HEK293 (cell line): ENCODE measurements at regions of chr16 and their contacts with region 1.

Region 1: DNA sequence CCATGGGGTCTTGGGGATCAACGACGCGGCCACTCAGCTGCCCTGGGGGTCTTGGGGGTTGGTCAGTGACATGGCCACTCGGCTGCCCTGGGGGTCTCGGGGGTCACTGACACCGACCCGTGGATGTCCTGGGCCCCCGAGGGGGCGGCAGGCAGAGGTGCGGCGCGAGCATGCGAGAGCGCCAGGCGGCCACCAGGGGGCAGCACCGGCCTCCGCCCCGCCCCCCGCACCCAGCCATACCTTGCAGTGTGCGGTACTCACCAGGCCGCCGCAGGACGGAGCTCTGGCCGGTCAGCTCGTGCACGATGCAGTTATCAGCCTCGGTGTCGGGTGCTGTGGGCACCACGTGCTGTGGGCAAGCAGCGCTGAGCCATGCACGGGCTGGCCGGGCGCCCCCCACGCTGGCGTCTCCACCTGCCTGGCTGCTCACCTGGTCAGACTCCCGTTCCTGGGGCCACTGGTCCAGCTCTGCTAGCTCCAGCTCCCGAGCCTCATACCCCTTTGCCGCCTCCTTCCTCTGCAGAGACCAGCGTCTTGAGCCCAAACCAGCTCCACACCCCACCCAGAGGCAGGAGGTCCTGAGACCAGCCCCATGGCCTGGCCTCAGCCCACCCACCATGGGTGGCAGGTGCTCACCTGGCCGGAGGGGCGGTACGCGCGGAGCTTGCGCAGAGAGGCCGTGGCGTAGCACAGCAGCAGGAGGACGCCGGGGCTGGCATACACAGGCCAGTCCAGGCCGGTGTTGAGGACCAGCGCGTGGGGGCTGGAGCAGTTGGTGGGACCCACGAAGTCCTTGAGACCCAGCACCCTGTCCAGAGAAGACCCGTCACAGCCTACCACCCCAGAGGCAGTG is 31.2 kb downstream of the CTU2 start:
- H3K4me3 ChIP-seq: no peak overlapping the region
- H3K27ac ChIP-seq: no peak overlapping the region; the same call in 1 of the 2 replicates
- H3K4me1 ChIP-seq: no peaks in the 10 kb centered on the region; the same call in 1 of the 2 replicates
- CTCF ChIP-seq: peak; percentile 99

Region 2: DNA sequence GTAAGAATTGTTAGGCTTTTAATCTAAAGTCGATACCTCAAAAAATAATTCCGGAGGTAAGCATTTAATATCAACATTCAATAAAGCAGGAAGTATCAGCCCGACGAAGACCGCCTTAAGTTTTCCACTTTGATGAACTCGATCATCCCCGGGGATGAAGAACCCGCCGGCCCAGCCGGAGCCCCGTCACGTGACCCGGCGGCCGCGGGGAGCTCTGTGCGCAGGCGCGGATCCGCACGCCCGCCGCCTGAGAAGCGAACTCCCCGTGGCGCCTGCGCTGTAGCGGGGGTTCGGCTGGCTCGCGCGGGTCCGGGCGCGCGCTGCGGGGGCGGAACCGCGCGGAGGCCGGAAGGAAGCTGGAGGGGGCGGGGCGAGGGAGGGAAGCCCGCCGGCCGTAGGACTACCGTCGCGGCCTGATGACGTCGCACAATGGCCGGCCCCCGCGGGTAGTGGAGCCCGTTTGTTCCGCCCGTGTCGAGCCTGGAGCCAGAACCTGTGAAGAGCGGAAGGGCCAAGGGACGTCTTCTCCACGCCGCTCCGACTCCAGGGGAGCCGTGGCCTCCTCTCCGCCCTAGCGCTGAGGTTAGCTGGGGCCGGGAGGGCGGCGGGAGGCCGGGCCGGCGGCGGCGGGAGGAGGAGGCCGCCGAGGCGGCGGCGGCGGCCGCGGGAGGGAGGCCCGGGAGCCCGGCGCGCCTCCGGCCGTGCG is 167.4 kb before region 1 on chr16 and contains the start of gene ZC3H18:
- CTCF ChIA-PET with region 1: no interaction called
- POLR2A ChIA-PET with region 1: no interaction called
- H3K4me3 ChIP-seq: peak within 1 kb of the TSS; percentile 97
- H3K27ac ChIP-seq: peak within 1 kb of the TSS; percentile 59
- H3K4me1 ChIP-seq: peaks cover 3% of the 10 kb centered on the region; the same call in 1 of the 2 replicates
- CTCF ChIP-seq: no peak

Region 3: DNA sequence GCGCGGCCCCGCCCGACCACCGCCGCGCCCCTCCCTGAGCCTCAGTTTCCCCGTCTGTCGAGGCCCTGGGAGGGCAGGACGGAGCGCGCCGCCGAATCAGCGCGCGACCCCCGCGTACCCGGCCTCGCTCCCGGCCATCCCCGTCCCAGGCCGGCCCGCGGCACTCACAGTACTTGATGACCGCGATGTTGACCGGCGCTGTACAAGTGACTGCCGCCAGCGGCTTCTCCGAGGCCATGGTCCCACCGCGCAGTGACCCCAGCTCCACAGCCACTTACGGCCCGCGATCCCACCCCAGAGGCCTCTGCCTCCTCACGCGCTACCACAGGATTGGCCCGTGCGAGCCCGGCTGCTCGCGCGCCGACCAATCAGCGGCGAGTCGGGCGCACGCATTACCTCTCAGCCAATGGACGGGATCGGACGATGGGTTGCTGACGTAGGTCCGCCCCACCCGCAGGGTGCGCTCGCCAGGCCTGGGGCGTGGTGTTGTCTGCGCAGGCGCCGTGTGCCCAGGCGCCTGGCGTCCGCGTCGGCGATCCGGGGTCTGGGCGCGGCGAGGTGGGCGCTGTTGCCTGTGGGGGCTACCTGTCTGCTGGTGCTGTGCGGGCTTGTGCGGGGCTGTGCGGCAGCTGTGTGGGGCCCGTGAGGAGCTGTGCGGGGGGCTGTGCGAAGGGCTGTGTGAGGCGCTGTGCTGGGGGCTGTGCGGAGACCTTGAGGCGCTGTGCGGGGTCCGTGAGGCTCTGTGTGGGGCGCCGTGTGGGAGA is 74.5 kb before region 1 on chr16 and contains the start of gene MVD:
- CTCF ChIA-PET with region 1: interaction called, 12 read pairs
- POLR2A ChIA-PET with region 1: no interaction called
- H3K4me3 ChIP-seq: peak within 1 kb of the TSS; percentile 96
- H3K27ac ChIP-seq: peak within 1 kb of the TSS; percentile 79
- H3K4me1 ChIP-seq: no peaks in the 10 kb centered on the region
- CTCF ChIP-seq: peak; percentile 95

Region 4: DNA sequence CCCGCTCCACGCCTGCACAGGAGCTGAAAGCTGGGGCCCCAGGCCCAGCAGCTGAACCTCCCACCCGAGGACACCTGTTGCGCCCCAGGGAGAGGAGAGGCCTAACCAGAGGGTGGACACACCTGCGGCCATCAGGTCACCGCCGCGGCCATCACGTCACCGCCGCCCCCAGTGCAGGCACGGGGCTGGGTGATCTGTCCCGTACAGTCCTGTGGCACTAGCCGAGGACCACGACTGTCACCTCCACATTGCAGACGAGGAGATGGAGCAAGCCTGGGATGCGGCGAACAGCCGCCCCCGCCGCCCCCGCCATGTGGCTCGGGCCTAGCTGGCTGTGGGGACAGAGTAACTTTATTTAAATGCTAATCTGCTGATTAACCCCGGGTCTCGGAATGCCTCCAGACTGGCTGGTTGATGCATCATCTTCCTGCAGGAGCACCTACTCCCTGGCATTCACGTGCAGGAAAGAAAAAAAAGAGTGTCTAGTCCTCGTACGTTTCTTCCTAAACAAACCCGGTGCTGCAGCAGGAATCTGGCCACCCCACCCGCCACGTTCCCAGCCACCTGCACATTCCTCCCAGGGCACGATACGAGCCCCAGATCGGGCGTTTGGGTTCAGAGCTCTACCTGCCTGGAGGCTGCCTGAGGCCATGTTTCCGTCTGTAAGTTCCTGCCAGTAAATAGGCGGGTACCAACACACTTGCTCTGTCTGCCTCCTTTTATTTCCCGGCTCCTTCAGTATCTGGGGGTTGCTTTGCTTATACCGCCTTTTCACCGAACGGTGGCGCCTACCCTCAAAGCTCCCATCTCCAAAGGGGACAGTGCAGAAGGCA is 17.6 kb after region 1 on chr16:
- CTCF ChIA-PET with region 1: interaction called, 28 read pairs
- POLR2A ChIA-PET with region 1: interaction called, 3 read pairs
- H3K4me3 ChIP-seq: no peak overlapping the region
- H3K27ac ChIP-seq: no peak overlapping the region
- H3K4me1 ChIP-seq: 0 out of 2 replicates have a peak, but pooled peaks cover 3% of the 10 kb centered on the region
- CTCF ChIP-seq: 0 out of 2 replicates have a peak, but pooled peaks have one; percentile 14

Region 5: GRCh38 chr16:88770461-88771293 is 33.2 kb after region 1 on chr16:
- CTCF ChIA-PET with region 1: interaction called, 58 read pairs
- POLR2A ChIA-PET with region 1: interaction called, 4 read pairs
- H3K4me3 ChIP-seq: peak overlapping the region; percentile 17
- H3K27ac ChIP-seq: peak overlapping the region; percentile 80
- H3K4me1 ChIP-seq: peaks cover 36% of the 10 kb centered on the region
- CTCF ChIP-seq: peak; percentile 14; the same call in 1 of the 2 replicates

Region 6: GRCh38 chr16:88791755-88792550 is 54.4 kb after region 1 on chr16:
- CTCF ChIA-PET with region 1: interaction called, 11 read pairs
- POLR2A ChIA-PET with region 1: no interaction called
- H3K4me3 ChIP-seq: no peak overlapping the region
- H3K27ac ChIP-seq: no peak overlapping the region
- H3K4me1 ChIP-seq: peaks cover 4% of the 10 kb centered on the region; the same call in 1 of the 2 replicates
- CTCF ChIP-seq: no peak

Region 7: GRCh38 chr16:88811769-88812512 is 74.4 kb after region 1 on chr16 and contains the start of gene APRT:
- CTCF ChIA-PET with region 1: interaction called, 25 read pairs
- POLR2A ChIA-PET with region 1: interaction called, 14 read pairs
- H3K4me3 ChIP-seq: peak within 1 kb of the TSS; percentile 66
- H3K27ac ChIP-seq: peak within 1 kb of the TSS; percentile 87
- H3K4me1 ChIP-seq: peaks cover 3% of the 10 kb centered on the region; the same call in 1 of the 2 replicates
- CTCF ChIP-seq: peak; percentile 44